ENCODE measurements at regions of chr1 and their contacts with region 1.

Region 1: DNA sequence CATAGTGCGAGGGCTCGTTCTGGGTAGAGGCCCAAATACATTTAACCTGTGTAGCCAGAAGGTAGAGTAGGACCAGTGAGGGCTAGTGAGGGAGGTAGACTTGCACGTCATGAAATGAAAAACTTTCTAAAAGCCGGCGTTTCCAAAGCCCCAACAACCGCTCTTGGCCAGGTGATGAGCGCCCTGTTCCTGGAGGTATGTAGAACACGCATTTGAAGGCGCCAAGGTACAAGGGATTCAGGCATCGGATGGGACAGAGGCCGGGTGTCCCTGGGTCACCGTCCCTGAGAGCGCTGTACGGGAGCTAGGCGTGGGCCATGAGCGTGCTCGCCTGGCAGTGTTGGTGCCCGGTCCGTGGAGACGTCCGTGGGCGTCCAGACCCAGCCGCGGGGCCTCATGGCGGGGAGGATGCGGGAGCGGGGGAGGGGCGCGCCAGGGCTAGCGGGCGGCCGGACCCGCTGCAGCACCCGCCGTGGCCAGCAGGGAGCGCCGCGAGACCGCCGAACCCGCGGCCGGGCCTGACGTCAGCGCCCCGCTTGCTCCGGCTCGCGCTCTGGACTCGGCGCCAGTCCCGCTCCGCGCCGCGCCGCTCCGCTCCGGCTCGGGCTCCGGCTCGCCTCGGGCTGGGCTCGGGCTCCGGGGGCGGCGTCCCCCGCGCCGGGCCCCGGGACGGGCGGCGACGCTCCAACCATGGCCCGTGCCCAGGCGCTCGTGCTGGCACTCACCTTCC is at the start of gene PTPRU:
- DNase-seq: peak; percentile 84
- H3K4me3 ChIP-seq: peak within 1 kb of the TSS; percentile 35 to 54 (median 52)
- H3K27ac ChIP-seq: peak within 1 kb of the TSS in 3 of 4 donors; percentile 26 to 70 (median 58)
- H3K4me1 ChIP-seq: peaks cover 4 to 24% (median 20%) of the 10 kb centered on the region in 4 donors
- H3K27me3 ChIP-seq: peaks cover 42% of the 10 kb centered on the region
- CTCF ChIP-seq: peak; percentile 41 to 84 (median 68)
- EP300 ChIP-seq: no peak
- POLR2A ChIP-seq: no peak
- total RNA-seq, gene PTPRU: 5.6 to 9.7 (median 7.4) TPM

Region 2: DNA sequence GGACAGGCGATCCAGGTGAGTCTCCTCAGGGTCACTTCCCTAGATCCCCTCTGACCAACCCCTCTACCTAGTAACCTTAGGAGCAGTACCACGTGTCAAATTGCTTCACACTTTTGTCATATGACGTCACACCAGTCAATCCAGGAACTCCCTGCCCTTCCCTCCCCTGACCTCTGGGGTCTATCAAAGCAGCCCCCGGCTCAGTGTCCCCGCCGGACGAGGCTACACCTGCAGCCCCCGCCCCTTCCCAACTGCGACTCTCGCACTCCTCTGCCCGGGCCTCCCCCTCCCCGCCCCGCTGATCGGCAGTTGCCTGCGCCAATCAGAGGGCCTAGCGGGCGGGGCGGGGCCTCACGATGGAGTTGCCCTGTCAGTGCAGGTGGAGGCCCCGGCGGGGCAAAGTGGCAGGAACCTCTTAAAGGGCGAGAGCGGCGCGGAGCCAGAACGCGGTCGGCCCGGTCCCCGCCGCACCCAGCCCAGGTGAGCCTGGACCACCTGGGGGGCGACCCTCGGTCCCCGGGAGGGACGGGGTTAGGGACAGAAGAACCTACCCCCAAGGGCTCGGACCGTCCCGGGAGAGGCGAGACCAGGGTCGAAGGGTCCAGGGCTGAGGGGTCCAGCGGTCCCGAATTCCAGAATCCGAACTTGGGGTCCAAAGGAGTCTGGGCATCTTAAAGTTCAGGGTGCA is 349.2 kb before region 1 on chr1:
- in situ Hi-C with region 1: no loop called
- intact Hi-C with region 1: no loop called
- DNase-seq: peak; percentile 93
- H3K4me3 ChIP-seq: peak overlapping the region; percentile 86 to 100 (median 94)
- H3K27ac ChIP-seq: peak overlapping the region; percentile 84 to 87 (median 86)
- H3K4me1 ChIP-seq: peaks cover 20 to 46% (median 30%) of the 10 kb centered on the region in 4 donors
- H3K27me3 ChIP-seq: no peaks in the 10 kb centered on the region
- CTCF ChIP-seq: peak in 1 of 5 experiments; percentile 29
- EP300 ChIP-seq: no peak
- POLR2A ChIP-seq: peak; percentile 84

Region 3: DNA sequence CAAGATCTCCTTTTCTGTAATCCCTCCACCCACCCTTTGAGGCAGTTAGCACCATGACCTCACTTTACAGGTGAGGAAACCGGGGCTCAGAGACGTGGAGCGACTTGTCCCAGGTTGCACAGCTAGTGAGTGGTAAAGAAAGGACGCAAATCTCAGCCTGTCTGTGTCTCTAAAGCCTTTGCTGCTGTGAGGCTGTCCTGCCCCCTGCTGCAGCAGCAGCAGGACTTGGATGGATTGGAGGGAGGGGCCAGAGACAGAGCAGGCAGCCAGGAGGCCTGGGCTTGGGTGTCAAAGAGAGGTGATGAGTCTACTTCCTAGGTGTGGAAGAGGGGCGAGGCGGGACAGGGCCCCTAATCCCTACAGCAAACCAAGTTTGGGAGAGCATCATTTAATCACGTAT is 69.8 kb after region 1 on chr1:
- in situ Hi-C with region 1: no loop called
- intact Hi-C with region 1: no loop called
- DNase-seq: no peak
- H3K4me3 ChIP-seq: no peak overlapping the region
- H3K27ac ChIP-seq: no peak overlapping the region
- H3K4me1 ChIP-seq: no peaks in the 10 kb centered on the region
- H3K27me3 ChIP-seq: no peaks in the 10 kb centered on the region
- CTCF ChIP-seq: no peak
- EP300 ChIP-seq: no peak
- POLR2A ChIP-seq: no peak

Region 4: DNA sequence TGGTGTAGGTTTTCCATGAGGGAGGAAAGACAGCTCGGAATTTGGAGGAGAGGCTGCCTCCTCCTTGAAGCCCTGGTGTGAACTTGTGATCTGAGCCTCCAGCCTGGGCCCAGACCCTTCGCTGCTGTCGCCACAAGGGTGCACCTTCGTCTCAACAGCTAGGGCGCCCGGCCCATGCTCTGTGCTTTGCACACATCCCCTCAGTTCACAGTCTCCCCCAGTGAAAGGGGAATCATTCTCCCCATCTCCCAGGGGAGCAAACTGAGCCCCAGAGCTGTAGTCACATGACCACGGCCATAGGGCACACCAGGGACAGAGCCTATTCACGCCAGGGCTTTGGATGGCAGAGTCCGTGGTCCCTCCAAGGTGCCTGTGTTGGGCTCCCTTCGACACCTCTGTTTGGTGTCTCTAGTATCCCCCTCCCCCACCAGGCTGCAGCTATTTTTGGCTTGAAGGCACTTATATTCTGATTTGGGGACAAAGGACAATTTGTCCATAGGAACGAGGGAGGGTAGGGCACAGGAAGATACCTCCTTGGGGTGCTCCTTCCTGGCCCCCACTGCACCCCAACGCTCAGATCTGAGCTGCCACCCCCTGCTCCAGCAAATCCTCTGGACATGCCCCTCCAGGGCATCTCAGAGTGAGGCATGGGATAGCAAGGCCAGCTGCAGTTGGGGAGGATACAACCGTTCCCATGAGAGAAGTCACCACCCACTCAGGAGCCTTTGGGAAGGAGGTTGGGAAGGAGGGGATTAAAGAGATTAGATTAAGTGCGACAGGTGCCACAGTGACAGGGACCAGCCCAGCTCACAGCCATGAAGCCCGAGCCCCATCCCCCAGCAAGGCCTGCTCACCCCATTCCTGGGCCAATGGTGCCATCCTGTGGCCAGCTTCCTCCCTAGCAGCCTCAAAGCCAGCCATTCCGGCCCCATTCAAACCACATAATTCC is 1471.6 kb after region 1 on chr1:
- in situ Hi-C with region 1: loop called in 3 of 4 experiments (anchors 10 to 25 kb)
- intact Hi-C with region 1: loop called (anchors 5 kb)
- DNase-seq: peak; percentile 72
- H3K4me3 ChIP-seq: no peak overlapping the region
- H3K27ac ChIP-seq: no peak overlapping the region
- H3K4me1 ChIP-seq: peaks cover 0 to 13% (median 9%) of the 10 kb centered on the region in 4 donors
- H3K27me3 ChIP-seq: peaks cover 10% of the 10 kb centered on the region
- CTCF ChIP-seq: peak; percentile 75 to 91 (median 75)
- EP300 ChIP-seq: no peak
- POLR2A ChIP-seq: no peak